Right ventricle myocardium inferior (tissue), 1 donor: ENCODE measurements at regions of chr1 and their contacts with region 1.

Region 1: GRCh38 chr1:213122514-213122929 is 71.5 kb downstream of the RPS6KC1 start:
- DNase-seq: no peak
- ATAC-seq: no peak

Region 2: DNA sequence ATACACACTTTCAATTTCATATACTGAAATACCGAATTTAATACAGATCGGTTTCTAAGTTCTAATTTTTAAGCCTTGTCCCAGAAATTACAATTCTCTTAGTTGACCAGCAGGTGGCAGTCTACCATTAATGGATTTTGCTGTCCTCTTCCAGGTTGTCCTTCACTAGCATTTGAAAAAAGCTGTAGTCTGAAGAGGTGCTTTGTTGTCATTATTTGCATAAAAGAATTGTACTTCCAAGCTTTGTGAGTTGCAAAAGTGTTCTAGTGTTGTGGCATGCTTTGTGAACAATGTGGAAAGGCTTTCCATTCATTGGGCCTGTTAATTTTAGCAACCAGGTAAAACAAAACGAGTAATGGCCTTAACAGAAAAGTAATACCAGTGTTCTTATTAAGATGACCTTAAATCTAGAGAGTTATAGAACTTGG is 122.2 kb after region 1 on chr1:
- intact Hi-C with region 1: loop called (anchors 10 kb)
- DNase-seq: no peak
- ATAC-seq: no peak